ENCODE measurements at regions of chr3 and their contacts with region 1.

Region 1: GRCh38 chr3:58013973-58014649 is 5.9 kb downstream of the FLNB start:
- DNase-seq: peak; percentile 58
- ATAC-seq: peak; percentile 62 to 71

Region 2: DNA sequence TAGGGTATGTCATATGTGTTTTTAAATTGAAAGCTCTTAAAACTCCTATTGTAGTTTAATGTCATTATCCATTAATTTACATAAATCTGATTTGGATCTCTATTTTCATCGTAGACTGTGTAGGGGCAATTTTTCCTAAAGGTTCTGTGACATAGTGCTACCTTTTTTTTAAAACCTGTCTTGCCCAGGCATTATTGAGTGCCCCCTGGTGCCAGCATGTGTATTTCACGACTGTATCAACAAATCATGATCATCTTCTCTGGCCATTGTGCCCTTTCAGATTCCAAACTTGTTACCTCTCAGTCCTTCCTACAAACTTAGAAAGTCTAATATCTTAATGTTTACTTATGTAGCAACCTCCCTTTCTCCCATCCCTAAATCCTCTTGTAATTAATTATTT is 103.1 kb before region 1 on chr3:
- intact Hi-C with region 1: no loop called
- DNase-seq: no peak
- ATAC-seq: no peak

Region 3: GRCh38 chr3:58116161-58116955 is 102.2 kb after region 1 on chr3:
- intact Hi-C with region 1: loop called in 1 of 2 experiments (anchors 10 kb)
- DNase-seq: no peak
- ATAC-seq: no peak

Measured in left cardiac atrium (tissue), 4 donors.